Endothelial cell of umbilical vein (primary cell): ENCODE measurements at regions of chr7 and their contacts with region 1.

Region 1: GRCh38 chr7:98400542-98401340 is at the start of gene BAIAP2L1:
- DNase-seq: peak; percentile 60
- H3K4me3 ChIP-seq: peak within 1 kb of the TSS; percentile 32 to 36 (median 35)
- H3K27ac ChIP-seq: no peak within 1 kb of the TSS
- H3K4me1 ChIP-seq: no peaks in the 10 kb centered on the region
- H3K27me3 ChIP-seq: peaks cover 6 to 10% of the 10 kb centered on the region in 2 experiments
- CTCF ChIP-seq: peak in 1 of 2 donors; percentile 79
- POLR2A ChIP-seq: no peak
- total RNA-seq, gene BAIAP2L1: 1.1 and 1.2 TPM in 2 replicates

Region 2: GRCh38 chr7:98240961-98241674 is 159.6 kb before region 1 on chr7:
- CTCF ChIA-PET with region 1: interaction called, 3 read pairs
- POLR2A ChIA-PET with region 1: no interaction called
- dilution Hi-C with region 1: no loop called
- intact Hi-C with region 1: loop called (anchors 1 kb)
- DNase-seq: peak; percentile 54
- H3K4me3 ChIP-seq: no peak overlapping the region
- H3K27ac ChIP-seq: no peak overlapping the region
- H3K4me1 ChIP-seq: peaks cover 12% of the 10 kb centered on the region
- H3K27me3 ChIP-seq: no peaks in the 10 kb centered on the region
- CTCF ChIP-seq: peak; percentile 86 to 93
- POLR2A ChIP-seq: no peak

Region 3: DNA sequence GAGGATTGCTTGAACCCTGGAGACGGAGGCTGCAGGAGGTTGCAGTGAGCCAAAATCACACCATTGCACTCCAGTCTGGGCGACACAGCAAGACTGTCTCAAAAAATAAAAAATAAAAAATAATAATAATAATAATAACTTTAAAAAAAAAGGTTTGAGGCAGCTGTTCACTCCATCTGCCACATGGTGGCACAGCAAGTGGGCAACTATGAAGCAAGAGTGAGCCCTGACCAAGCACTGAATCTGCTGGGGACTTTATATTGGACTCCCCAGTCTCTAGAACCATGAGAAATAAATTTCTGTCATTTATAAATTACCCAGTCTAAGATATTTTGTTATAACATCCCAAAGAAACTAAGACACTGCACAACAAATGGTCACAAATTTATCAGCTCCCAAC is 133.9 kb before region 1 on chr7:
- CTCF ChIA-PET with region 1: interaction called, 12 read pairs
- POLR2A ChIA-PET with region 1: no interaction called
- dilution Hi-C with region 1: no loop called
- intact Hi-C with region 1: no loop called
- DNase-seq: no peak
- H3K4me3 ChIP-seq: no peak overlapping the region
- H3K27ac ChIP-seq: no peak overlapping the region
- H3K4me1 ChIP-seq: peaks cover 8% of the 10 kb centered on the region
- H3K27me3 ChIP-seq: no peaks in the 10 kb centered on the region
- CTCF ChIP-seq: peak in 1 of 2 donors; percentile 43
- POLR2A ChIP-seq: no peak

Region 4: GRCh38 chr7:98294796-98295382 is 105.9 kb before region 1 on chr7:
- CTCF ChIA-PET with region 1: interaction called, 12 read pairs
- POLR2A ChIA-PET with region 1: interaction called, 4 read pairs
- dilution Hi-C with region 1: no loop called
- intact Hi-C with region 1: loop called (anchors 1 kb)
- DNase-seq: peak; percentile 32
- H3K4me3 ChIP-seq: no peak overlapping the region
- H3K27ac ChIP-seq: no peak overlapping the region
- H3K4me1 ChIP-seq: no peaks in the 10 kb centered on the region
- H3K27me3 ChIP-seq: no peaks in the 10 kb centered on the region
- CTCF ChIP-seq: peak; percentile 58 to 69
- POLR2A ChIP-seq: peak; percentile 63

Region 5: DNA sequence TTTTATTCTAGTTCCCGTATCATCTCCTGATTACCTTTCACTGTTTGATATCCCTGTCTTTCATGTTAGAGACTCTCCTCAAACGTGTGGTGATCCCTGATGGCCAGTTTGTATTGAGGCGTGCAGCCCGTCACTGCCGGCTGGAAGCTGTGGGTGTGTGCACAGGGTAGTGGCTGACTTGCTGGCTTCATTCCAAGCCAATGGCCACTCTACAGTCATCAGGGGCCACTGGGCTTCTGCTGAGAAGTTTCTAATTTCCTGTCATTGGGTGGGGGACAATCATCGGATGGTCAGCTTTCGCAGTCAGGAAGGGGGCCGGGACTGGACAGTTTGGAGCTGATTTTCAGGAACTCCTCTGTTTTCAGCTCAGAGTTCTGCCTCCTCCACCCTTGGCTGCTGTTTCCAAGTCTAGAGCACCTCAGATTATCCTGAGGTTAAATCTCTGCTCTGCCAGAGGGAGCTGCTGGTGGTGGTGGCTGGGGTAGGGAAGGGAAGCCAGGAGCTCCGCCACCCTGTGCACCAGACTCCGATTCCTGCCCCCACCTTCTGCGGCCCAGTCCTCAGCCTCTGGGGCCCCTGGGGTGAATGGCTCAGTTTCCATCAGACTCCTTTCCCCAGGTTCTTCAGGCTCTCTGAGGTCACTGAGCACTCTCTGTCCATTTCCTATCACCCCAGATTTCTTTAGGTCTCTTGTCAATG is 34.7 kb before region 1 on chr7:
- CTCF ChIA-PET with region 1: interaction called, 5 read pairs
- POLR2A ChIA-PET with region 1: no interaction called
- dilution Hi-C with region 1: no loop called
- intact Hi-C with region 1: loop called (anchors 5 kb)
- DNase-seq: peak; percentile 30
- H3K4me3 ChIP-seq: no peak overlapping the region
- H3K27ac ChIP-seq: no peak overlapping the region
- H3K4me1 ChIP-seq: peaks cover 15% of the 10 kb centered on the region
- H3K27me3 ChIP-seq: no peaks in the 10 kb centered on the region
- CTCF ChIP-seq: no peak
- POLR2A ChIP-seq: no peak